ENCODE measurements at regions of chr15 and their contacts with region 1.

Region 1: DNA sequence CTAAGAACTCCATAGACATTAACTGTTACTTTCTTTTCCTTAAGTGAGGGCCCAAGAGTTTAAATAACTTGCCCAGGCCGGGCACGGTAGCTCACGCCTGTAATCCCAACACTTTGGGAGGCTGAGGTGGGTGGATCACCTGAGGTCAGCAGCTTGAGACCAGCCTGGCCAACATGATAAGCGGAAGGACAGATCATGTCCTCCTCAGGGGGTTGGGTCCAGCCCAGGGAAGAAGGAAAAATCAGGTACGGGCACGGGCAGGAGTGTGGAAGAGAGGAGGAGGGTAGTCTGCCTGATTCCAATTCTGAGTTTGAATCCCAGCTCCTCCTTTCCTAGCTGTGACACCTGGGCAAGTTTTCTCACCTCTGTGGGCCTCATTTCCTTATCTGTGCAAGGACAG is 118.8 kb downstream of the ANP32A start:
- DNase-seq: no peak
- ATAC-seq: no peak
- H3K4me3 ChIP-seq: no peak overlapping the region
- H3K27ac ChIP-seq: no peak overlapping the region
- H3K4me1 ChIP-seq: peaks cover under 1% of the 10 kb centered on the region in 2 experiments; a peak in 2 of 4 replicates
- H3K27me3 ChIP-seq: no peaks in the 10 kb centered on the region
- CTCF ChIP-seq: no peak
- POLR2A ChIP-seq: no peak
- RAD21 ChIP-seq: no peak

Region 2: DNA sequence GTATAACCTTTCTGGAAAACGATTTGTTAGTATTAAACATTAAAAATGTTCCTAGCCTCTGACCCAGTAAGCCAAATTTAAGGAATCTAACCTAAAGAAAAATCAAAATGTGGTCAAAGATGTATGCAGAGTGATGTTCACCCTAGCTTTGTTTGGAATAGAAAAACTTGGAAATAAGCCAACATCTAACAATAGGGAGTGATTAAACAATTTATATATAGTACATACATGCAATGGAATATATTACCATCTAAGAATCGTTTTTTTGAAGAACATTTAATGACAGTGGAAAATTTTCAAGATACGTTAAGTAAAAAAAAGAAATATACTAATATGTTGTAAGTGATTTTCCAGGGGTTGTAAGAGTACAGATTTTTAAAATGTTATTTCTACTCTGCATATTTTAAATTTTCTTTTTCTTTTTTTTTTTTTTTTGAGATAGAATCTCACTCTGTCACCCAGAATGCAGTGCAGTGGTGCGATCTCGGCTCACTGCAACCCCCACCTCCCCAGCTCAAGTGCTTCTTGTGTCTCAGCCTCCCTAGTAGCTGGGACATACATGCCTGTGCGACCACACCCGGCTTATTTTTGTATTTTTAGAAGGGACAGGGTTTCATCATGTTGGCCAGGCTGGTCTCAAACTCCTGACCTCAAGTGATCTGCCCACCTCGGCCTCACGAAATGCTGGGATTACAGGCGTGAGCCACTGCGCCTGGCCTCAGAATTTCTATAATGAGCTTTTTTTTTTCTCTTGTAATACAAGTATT is 63.9 kb after region 1 on chr15:
- CTCF ChIA-PET with region 1: interaction called, 10 read pairs
- POLR2A ChIA-PET with region 1: no interaction called
- RAD21 ChIA-PET with region 1: no interaction called
- intact Hi-C with region 1: no loop called
- DNase-seq: no peak
- ATAC-seq: no peak
- H3K4me3 ChIP-seq: no peak overlapping the region
- H3K27ac ChIP-seq: no peak overlapping the region
- H3K4me1 ChIP-seq: peaks cover 0 to 3% of the 10 kb centered on the region in 2 experiments; a peak in 1 of 4 replicates
- H3K27me3 ChIP-seq: no peaks in the 10 kb centered on the region
- CTCF ChIP-seq: no peak
- POLR2A ChIP-seq: no peak
- RAD21 ChIP-seq: no peak